ENCODE measurements at regions of chr13 and their contacts with region 1.

Region 1: GRCh38 chr13:48400850-48401291 is 12.0 kb downstream of the LPAR6 start:
- DNase-seq: no peak
- H3K4me3 Mint-ChIP-seq: no peak overlapping the region
- H3K27ac Mint-ChIP-seq: peak overlapping the region; percentile 9
- H3K4me1 Mint-ChIP-seq: peaks cover 58% of the 10 kb centered on the region
- H3K27me3 Mint-ChIP-seq: no peaks in the 10 kb centered on the region

Region 2: DNA sequence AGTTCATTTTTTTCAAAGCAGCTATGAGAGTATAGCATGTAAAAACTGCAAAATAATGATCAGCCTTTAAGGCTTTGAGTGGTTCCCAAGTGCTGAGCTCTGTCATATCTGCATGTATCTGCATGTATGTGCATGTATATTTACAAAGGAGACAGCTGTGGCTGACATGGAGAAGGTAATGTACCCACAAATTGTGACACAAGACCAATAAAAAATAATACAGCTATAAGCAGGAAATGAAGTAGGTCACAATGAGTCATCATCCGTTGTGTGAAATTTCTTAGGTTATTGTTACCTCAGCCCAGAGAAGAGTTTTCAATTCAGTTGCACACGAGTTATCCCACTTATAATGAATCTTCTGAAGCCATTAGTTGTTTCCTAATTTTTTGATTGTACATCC is 245.0 kb before region 1 on chr13:
- CTCF ChIA-PET with region 1: no interaction called
- intact Hi-C with region 1: loop called (anchors 10 kb)
- DNase-seq: peak; percentile 44
- H3K4me3 Mint-ChIP-seq: peak overlapping the region; percentile 74
- H3K27ac Mint-ChIP-seq: peak overlapping the region; percentile 99
- H3K4me1 Mint-ChIP-seq: peaks cover 85% of the 10 kb centered on the region
- H3K27me3 Mint-ChIP-seq: no peaks in the 10 kb centered on the region

Region 3: GRCh38 chr13:48303359-48304142 is 97.3 kb before region 1 on chr13 and contains the start of gene RB1:
- CTCF ChIA-PET with region 1: no interaction called
- intact Hi-C with region 1: loop called (anchors 2 kb)
- DNase-seq: peak; percentile 92
- H3K4me3 Mint-ChIP-seq: peak within 1 kb of the TSS; percentile 87
- H3K27ac Mint-ChIP-seq: peak within 1 kb of the TSS; percentile 97
- H3K4me1 Mint-ChIP-seq: peaks cover 23% of the 10 kb centered on the region
- H3K27me3 Mint-ChIP-seq: no peaks in the 10 kb centered on the region
- total RNA-seq, gene RB1: 25.1 to 25.6 TPM

Region 4: GRCh38 chr13:48492470-48493065 is 91.7 kb after region 1 on chr13:
- CTCF ChIA-PET with region 1: no interaction called
- intact Hi-C with region 1: loop called (anchors 1 kb)
- DNase-seq: peak; percentile 74
- H3K4me3 Mint-ChIP-seq: no peak overlapping the region
- H3K27ac Mint-ChIP-seq: no peak overlapping the region
- H3K4me1 Mint-ChIP-seq: peaks cover 39% of the 10 kb centered on the region
- H3K27me3 Mint-ChIP-seq: no peaks in the 10 kb centered on the region

Region 5: GRCh38 chr13:48562296-48563066 is 161.6 kb after region 1 on chr13:
- CTCF ChIA-PET with region 1: no interaction called
- intact Hi-C with region 1: loop called (anchors 1 kb)
- DNase-seq: peak; percentile 76
- H3K4me3 Mint-ChIP-seq: no peak overlapping the region
- H3K27ac Mint-ChIP-seq: no peak overlapping the region
- H3K4me1 Mint-ChIP-seq: peaks cover 23% of the 10 kb centered on the region
- H3K27me3 Mint-ChIP-seq: peaks cover 47% of the 10 kb centered on the region

Region 6: GRCh38 chr13:48731957-48732569 is 331.2 kb after region 1 on chr13:
- CTCF ChIA-PET with region 1: no interaction called
- intact Hi-C with region 1: loop called (anchors 5 kb)
- DNase-seq: peak; percentile 65
- H3K4me3 Mint-ChIP-seq: peak overlapping the region; percentile 58
- H3K27ac Mint-ChIP-seq: no peak overlapping the region
- H3K4me1 Mint-ChIP-seq: peaks cover 19% of the 10 kb centered on the region
- H3K27me3 Mint-ChIP-seq: peaks cover 3% of the 10 kb centered on the region

Measured in activated naive CD4-positive, alpha-beta T cell treated with anti-CD3 and anti-CD28 coated beads for 36 hours (primary cell).